ENCODE measurements at regions of chr2 and their contacts with region 1.

Region 1: GRCh38 chr2:111120253-111121027 is at the start of gene BCL2L11:
- DNase-seq: peak; percentile 66 to 94 (median 87)

Region 2: DNA sequence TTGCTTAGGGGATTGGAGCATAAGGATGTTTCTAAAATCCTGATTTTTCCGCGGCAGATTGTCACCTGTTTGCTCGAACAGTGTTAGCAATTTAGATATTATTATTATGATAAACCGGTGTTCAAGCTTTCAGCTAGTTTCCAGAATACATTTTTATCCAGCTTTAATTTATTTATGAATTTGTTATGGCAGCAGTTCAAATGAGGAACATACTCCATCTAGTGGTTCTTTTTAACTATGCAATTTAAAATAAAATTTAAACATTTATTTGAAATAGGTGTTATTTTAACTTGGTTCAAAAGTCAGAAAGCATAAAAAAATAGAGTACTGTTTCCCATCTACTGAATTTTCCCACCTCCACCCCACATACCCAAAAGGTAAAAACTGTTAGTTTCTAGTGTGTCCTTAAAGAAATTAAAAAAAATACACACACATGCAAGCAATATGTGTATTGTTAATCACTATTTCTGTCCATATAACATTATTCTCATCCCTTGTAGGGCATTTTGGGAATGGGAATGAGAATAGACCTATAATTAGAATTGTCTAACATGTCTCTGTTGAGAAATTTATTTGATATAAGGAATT is 364.9 kb before region 1 on chr2:
- intact Hi-C with region 1: no loop called
- DNase-seq: no peak

Region 3: DNA sequence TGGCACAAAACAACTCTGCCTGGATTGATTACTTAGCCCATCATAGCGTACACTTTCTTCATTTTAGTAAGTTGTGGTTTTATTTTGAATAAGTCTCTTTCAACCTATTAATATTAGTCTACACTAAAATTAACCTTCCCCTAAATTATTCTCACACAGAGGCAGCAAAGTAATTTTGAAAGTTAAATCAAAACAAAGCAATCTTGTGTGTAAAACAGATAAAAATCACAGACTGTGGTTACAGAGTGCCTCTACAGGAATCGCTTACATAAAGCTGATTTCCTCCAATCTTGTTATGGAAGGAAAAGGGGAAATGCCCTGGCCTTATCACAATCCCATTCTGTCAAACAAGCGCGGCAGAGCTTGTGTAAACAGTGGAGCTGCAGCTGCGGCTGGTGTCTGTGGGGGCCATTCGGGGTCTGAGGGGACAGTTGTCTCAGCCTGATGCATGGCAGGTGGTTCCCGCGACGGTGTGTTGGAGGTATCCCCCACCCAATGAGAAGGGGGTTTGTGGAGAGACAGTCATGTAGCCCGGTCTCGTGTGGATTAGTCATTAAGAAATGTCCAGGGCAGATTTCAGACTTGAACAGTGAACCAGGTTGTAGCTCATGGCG is 42.4 kb after region 1 on chr2:
- intact Hi-C with region 1: loop called (anchors 5 kb)
- DNase-seq: no peak

Measured in head of caudate nucleus (tissue), 42 donors.